ENCODE measurements at regions of chr13 and their contacts with region 1.

Region 1: DNA sequence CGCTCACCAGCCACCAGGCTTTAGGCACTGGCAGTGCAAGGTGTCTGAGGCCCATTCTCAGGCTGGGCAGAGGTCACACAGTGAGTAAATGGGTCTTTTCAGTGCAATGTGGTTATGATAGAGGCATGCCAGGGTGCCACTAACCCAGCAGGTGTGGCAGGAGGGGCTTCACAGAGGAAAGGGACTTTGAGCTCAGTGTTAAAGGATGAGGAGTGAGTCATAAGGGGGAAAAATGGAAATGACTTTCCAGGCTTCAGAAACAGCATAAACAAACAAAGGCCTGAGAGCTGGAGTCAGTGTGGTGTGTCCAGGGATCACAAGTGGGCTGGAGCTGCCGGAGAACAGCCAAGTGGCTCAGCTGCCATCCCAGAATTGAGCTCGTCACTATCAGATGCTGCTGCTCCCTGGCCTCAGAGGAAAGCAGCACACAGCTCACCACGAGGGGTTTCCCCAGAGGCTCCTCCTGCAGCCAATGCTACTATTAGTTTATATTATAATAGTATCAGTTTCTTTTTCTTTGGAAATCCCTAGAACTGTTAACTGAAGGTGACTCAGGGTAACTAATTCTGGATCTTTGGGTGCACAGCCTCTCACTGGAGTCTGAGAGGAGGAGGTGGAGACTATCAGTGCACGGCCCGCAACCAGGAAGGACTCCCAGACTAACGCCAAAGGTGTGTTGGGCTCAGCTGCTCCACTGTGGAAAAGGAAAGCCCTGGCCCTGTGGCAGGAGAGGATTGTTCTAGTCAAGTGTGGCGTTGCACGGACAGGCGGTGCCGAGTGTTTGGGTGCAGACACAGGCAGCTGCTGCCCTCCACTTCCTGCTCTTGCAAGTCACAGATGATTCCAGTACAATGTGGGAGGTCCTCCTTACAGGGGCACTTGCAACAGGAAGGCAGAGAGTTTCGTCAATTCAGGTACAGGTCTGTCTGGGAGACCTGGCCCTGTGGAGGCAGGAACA is 39.5 kb downstream of the DHRS12 start:
- DNase-seq: peak; percentile 86
- H3K4me3 Mint-ChIP-seq: peak overlapping the region; percentile 88
- H3K27ac Mint-ChIP-seq: peak overlapping the region; percentile 96
- H3K4me1 Mint-ChIP-seq: peaks cover 39% of the 10 kb centered on the region
- H3K27me3 Mint-ChIP-seq: no peaks in the 10 kb centered on the region

Region 2: DNA sequence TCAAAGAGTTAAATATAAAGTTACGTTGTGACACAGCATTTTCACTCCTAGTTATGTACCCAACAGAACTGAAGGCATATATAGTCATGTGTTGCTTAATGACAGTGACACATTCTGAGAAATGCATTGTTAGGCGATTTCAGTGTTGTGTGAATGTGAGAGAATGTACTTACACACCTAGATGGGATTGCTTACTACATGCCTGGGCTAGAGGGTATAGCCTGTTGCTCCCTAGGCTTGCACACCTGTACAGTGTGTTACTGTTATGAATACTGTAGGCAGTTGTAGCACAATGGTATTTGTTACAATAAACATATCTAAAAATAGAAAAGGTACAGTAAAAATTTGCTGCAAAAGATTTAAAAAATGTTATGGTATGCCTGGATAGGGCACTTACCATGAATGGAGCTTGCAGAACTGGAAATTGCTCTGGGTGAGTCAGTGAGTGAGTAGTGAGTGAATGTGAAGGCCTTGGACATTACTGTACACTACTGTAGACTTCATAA is 49.7 kb before region 1 on chr13:
- intact Hi-C with region 1: loop called (anchors 10 kb)
- DNase-seq: no peak
- H3K4me3 Mint-ChIP-seq: no peak overlapping the region
- H3K27ac Mint-ChIP-seq: no peak overlapping the region
- H3K4me1 Mint-ChIP-seq: no peaks in the 10 kb centered on the region
- H3K27me3 Mint-ChIP-seq: no peaks in the 10 kb centered on the region

Region 3: GRCh38 chr13:51729866-51730546 is 34.5 kb before region 1 on chr13:
- intact Hi-C with region 1: loop called (anchors 2 kb)
- DNase-seq: peak; percentile 74
- H3K4me3 Mint-ChIP-seq: no peak overlapping the region
- H3K27ac Mint-ChIP-seq: no peak overlapping the region
- H3K4me1 Mint-ChIP-seq: peaks cover 11% of the 10 kb centered on the region
- H3K27me3 Mint-ChIP-seq: no peaks in the 10 kb centered on the region

Region 4: GRCh38 chr13:51740698-51741097 is 23.8 kb before region 1 on chr13:
- intact Hi-C with region 1: loop called (anchors 1 kb)
- DNase-seq: no peak
- H3K4me3 Mint-ChIP-seq: peak overlapping the region; percentile 14
- H3K27ac Mint-ChIP-seq: no peak overlapping the region
- H3K4me1 Mint-ChIP-seq: peaks cover 22% of the 10 kb centered on the region
- H3K27me3 Mint-ChIP-seq: no peaks in the 10 kb centered on the region

Measured in activated CD4-positive, alpha-beta T cell treated with anti-CD3 and anti-CD28 coated beads, Interleukin-2, amount 10 ng/mL, durations not matched to agents 24 days and 14 days (primary cell).